ENCODE measurements at regions of chr13 and their contacts with region 1.

Region 1: GRCh38 chr13:95403828-95404522 is 102.7 kb upstream of the ABCC4 start:
- DNase-seq: peak; percentile 51
- ATAC-seq: peak; percentile 94
- H3K4me3 ChIP-seq: peak overlapping the region in 1 of 3 experiments; percentile 39; a peak in 1 of 6 replicates
- H3K27ac ChIP-seq: no peak overlapping the region
- H3K4me1 ChIP-seq: peaks cover 13% of the 10 kb centered on the region
- H3K27me3 ChIP-seq: no peaks in the 10 kb centered on the region; a peak in 2 of 5 replicates
- CTCF ChIP-seq: peak; percentile 95
- EP300 ChIP-seq: no peak
- POLR2A ChIP-seq: no peak
- RAD21 ChIP-seq: peak; percentile 94

Region 2: GRCh38 chr13:94674609-94675348 is 729.2 kb before region 1 on chr13:
- CTCF ChIA-PET with region 1: interaction called, 5 read pairs
- POLR2A ChIA-PET with region 1: no interaction called
- in situ Hi-C with region 1: loop called (anchors 25 kb)
- intact Hi-C with region 1: loop called (anchors 1 kb)
- DNase-seq: peak; percentile 59
- ATAC-seq: peak; percentile 93
- H3K4me3 ChIP-seq: no peak overlapping the region
- H3K27ac ChIP-seq: no peak overlapping the region
- H3K4me1 ChIP-seq: no peaks in the 10 kb centered on the region
- H3K27me3 ChIP-seq: peaks cover 0 to 5% of the 10 kb centered on the region in 2 experiments; a peak in 2 of 5 replicates
- CTCF ChIP-seq: peak; percentile 73
- EP300 ChIP-seq: no peak
- POLR2A ChIP-seq: no peak
- RAD21 ChIP-seq: peak; percentile 39; the same call in 1 of the 2 replicates

Region 3: DNA sequence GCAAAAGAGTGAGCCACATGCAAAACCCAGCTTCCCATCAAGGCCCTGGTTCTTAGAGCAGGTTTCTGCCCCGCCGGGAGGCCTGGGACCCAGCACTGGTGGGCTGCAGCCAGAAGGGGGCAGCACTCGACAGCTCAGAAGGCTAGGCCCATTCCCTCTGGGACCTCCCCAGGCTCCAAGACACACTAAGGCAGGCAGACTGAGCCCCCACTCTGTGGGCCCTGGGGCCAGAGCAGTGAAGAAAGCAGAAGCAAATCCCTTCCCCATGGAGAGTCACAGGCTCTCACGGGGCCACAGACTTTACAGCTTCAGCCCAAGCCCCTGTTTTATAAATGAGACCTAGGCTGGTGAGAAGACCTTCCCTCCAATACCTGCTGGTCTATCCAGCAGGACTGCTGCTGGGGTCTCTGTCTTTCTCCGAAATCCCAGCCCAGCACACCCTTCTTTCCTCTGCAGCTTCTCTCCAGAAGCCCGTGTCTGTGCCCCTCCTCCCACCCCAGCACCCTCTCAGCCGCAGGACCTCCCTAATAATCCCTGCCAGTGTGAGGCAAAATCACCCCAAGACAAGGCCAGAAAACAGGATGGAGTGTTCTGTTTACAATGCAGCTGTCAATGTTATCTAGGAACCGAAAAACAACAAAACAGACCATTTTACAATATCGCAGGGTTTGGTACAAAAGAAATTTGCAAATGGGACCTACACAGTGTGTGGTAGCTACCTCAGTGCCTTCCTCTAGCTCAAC is 212.0 kb before region 1 on chr13:
- CTCF ChIA-PET with region 1: interaction called, 82 read pairs
- POLR2A ChIA-PET with region 1: no interaction called
- in situ Hi-C with region 1: loop called (anchors 5 kb)
- intact Hi-C with region 1: loop called (anchors 1 kb)
- DNase-seq: peak; percentile 41
- ATAC-seq: peak; percentile 99
- H3K4me3 ChIP-seq: no peak overlapping the region
- H3K27ac ChIP-seq: no peak overlapping the region
- H3K4me1 ChIP-seq: 0 out of 2 replicates have a peak, but pooled peaks cover 10% of the 10 kb centered on the region
- H3K27me3 ChIP-seq: no peaks in the 10 kb centered on the region
- CTCF ChIP-seq: peak; percentile 96
- EP300 ChIP-seq: no peak
- POLR2A ChIP-seq: no peak
- RAD21 ChIP-seq: peak; percentile 92

Region 4: GRCh38 chr13:95378603-95379002 is 25.4 kb before region 1 on chr13:
- CTCF ChIA-PET with region 1: interaction called, 5 read pairs
- POLR2A ChIA-PET with region 1: no interaction called
- in situ Hi-C with region 1: no loop called
- intact Hi-C with region 1: loop called (anchors 1 kb)
- DNase-seq: no peak
- ATAC-seq: no peak
- H3K4me3 ChIP-seq: no peak overlapping the region
- H3K27ac ChIP-seq: no peak overlapping the region
- H3K4me1 ChIP-seq: peaks cover 10% of the 10 kb centered on the region; the same call in 1 of the 2 replicates
- H3K27me3 ChIP-seq: no peaks in the 10 kb centered on the region
- CTCF ChIP-seq: no peak
- EP300 ChIP-seq: no peak
- POLR2A ChIP-seq: no peak
- RAD21 ChIP-seq: no peak

Measured in HepG2 (cell line).